Dendritic cell treated with granulocyte-macrophage colony-stimulating factor and Interleukin-4, amounts not matched to agents 40 ng/mL and 50 ng/mL, for 4 days (primary cell): ENCODE measurements at regions of chr9 and their contacts with region 1.

Region 1: GRCh38 chr9:27573634-27574590 is 631 bp upstream of the C9orf72 start:
- H3K4me3 Mint-ChIP-seq: peak overlapping the region; percentile 93
- H3K27ac Mint-ChIP-seq: peak overlapping the region; percentile 97
- H3K4me1 Mint-ChIP-seq: peaks cover 39% of the 10 kb centered on the region
- H3K27me3 Mint-ChIP-seq: no peaks in the 10 kb centered on the region

Region 2: DNA sequence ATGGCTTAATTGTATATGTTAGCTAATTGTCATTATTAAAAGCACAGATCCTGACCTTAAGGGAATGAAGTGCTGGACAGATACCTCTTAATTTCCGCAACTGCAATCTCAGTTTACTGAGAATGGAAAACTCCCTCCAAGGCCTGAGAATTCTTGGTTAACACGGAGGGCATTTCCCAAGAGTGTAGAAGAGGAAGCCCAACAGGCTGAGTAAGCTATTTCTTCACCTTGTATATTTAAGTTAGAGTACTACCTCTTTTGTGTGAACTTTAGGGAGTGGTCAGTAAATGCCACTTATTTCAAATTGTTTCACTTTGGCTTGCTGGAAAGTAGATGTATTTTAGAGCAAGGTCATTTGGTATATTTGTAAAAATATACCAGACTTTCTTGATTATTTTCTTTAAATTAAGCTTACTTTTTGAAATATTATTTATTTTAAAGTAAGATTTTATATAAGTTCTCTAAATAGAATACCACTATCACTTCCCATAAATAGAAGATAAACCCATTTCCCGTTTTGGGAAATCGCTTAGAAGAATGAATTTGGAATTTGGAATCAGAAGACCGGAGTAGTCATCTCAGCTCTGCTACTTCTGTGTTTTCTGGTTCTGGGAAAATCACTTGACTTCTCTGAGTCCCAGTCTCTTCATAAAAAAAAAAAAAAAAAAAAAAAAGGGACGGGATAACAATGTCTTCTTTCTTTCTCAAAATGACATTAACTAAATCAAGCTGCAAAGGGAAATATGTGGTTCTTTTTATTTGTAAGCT is 25.4 kb after region 1 on chr9:
- intact Hi-C with region 1: loop called (anchors 1 kb)
- H3K4me3 Mint-ChIP-seq: peak overlapping the region; percentile 61
- H3K27ac Mint-ChIP-seq: peak overlapping the region; percentile 92
- H3K4me1 Mint-ChIP-seq: peaks cover 68% of the 10 kb centered on the region
- H3K27me3 Mint-ChIP-seq: no peaks in the 10 kb centered on the region

Region 3: GRCh38 chr9:27634879-27635278 is 61.0 kb after region 1 on chr9:
- intact Hi-C with region 1: loop called (anchors 2 kb)
- H3K4me3 Mint-ChIP-seq: no peak overlapping the region
- H3K27ac Mint-ChIP-seq: peak overlapping the region; percentile 43
- H3K4me1 Mint-ChIP-seq: peaks cover 36% of the 10 kb centered on the region
- H3K27me3 Mint-ChIP-seq: peaks cover 1% of the 10 kb centered on the region

Region 4: DNA sequence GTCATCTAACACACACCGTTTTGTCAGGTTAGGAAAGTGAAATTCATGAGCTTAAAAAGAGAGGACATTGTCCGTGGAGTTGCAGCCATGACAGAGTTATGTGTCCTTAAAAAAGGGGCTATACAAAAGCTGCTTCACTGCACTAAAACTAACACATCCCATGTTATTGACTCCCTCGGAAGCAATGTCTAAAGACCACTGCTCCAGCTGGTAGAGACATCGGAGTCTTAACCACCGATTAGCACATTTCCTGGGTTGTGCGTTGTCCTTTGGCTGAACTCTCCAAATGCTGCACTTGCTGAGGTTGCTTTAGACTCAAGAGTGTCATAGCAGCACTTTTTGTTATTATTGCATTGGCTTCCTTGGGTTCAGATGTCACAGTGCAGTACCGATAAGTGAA is 127.7 kb after region 1 on chr9:
- intact Hi-C with region 1: loop called (anchors 5 kb)
- H3K4me3 Mint-ChIP-seq: peak overlapping the region; percentile 44
- H3K27ac Mint-ChIP-seq: peak overlapping the region; percentile 82
- H3K4me1 Mint-ChIP-seq: peaks cover 30% of the 10 kb centered on the region
- H3K27me3 Mint-ChIP-seq: no peaks in the 10 kb centered on the region